ENCODE measurements at regions of chrX and their contacts with region 1.

Region 1: GRCh38 chrX:72358313-72358712 is 52.6 kb upstream of the CITED1 start:
- DNase-seq: peak; percentile 50
- H3K4me3 ChIP-seq: no peak overlapping the region
- H3K27ac ChIP-seq: no peak overlapping the region
- H3K4me1 ChIP-seq: peaks cover 6% of the 10 kb centered on the region
- H3K27me3 ChIP-seq: no peaks in the 10 kb centered on the region
- CTCF ChIP-seq: no peak

Region 2: DNA sequence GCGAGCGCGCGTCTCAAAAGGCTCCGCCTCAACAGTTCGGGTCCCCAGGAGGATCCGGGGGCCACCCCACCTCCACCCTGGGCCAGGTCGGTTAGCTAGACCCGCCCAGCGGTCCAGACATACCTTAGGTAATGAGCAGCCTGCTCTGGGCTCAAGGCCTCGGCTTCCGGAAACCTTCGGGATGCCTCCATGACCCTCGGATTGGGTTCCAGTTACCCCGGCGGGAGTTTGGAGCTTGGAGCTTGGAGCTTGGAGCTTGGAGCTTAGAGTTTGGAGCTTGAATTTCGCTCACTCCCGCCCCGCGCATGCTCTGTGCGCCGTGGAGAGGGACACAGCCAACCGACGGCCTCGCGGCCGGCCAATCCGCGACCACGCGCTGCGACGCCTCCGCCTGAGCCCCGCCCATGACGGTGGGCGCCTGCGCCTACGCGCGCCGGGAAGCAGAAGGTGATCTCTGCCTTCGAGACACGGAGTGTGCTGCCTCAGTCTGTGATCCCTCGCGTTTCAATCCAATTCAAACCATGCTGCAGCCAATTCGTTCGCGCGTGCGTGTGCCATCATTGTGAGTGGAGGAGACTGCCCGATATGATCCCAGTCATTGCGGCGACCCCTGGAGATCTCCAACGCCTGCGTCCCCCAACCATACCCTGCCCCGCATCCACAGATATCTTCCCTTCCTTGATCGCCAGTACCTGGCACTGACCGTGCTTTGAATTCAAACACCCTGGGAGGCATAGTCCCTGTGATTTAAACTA is 119.4 kb before region 1 on chrX and contains the start of gene ERCC6L:
- CTCF ChIA-PET with region 1: no interaction called
- dilution Hi-C with region 1: no loop called
- in situ Hi-C with region 1: no loop called
- intact Hi-C with region 1: no loop called
- DNase-seq: peak; percentile 84
- H3K4me3 ChIP-seq: peak within 1 kb of the TSS; percentile 42 to 58 (median 52)
- H3K27ac ChIP-seq: peak within 1 kb of the TSS; percentile 52
- H3K4me1 ChIP-seq: no peaks in the 10 kb centered on the region
- H3K27me3 ChIP-seq: no peaks in the 10 kb centered on the region
- CTCF ChIP-seq: no peak
- total RNA-seq, gene ERCC6L: 0.17 to 7.0 TPM

Region 3: GRCh38 chrX:72409993-72410392 is 51.7 kb after region 1 on chrX:
- CTCF ChIA-PET with region 1: no interaction called
- dilution Hi-C with region 1: loop called (anchors 5 kb)
- in situ Hi-C with region 1: no loop called
- intact Hi-C with region 1: no loop called
- DNase-seq: no peak
- H3K4me3 ChIP-seq: no peak overlapping the region
- H3K27ac ChIP-seq: no peak overlapping the region
- H3K4me1 ChIP-seq: no peaks in the 10 kb centered on the region
- H3K27me3 ChIP-seq: no peaks in the 10 kb centered on the region
- CTCF ChIP-seq: no peak